IMR-90 (cell line): ENCODE measurements at regions of chr22 and their contacts with region 1.

Region 1: DNA sequence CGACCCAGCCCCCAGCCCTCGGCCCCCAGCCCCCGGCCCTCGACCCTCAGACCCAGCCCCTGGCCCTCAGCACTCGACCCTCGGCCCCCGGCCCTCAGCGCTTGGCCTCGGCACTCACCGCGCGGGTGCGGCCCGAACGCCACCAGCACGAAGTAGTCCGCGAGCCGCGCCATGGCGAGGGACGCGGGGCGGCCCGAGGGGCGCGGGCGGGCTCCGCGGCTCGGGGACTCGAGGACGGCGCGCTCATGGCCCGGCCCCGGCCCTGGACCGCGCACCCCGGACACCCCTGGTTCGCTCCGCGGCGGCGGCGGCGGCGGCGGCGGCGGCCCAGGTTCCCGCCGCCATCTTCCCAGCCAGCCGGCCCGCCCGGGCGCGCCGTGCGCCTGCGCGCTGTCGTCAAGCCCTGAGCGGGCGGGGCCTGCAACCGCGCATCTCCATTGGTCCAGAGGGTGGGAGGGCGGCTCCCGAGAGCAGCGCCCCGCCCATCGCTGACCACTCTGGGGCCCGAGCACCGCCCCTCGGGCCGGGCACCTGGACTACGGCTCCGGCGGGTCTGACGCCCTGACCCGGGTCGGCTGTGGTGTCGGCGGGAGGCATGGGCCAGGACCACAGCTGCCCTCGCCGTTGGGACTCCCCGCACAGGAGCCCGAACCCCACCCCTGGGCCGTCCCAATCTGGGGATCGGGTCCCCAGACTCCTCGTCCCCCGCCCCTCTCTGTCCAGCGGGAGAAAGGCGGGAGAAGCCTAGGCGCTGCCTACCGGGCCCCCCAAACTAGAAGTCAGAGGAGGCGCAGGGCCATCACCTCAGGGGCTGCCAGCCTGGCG is at the start of gene SBF1:
- DNase-seq: peak; percentile 84
- ATAC-seq: peak; percentile 96
- H3K4me3 ChIP-seq: peak within 1 kb of the TSS; percentile 87
- H3K27ac ChIP-seq: peak within 1 kb of the TSS; percentile 53
- H3K4me1 ChIP-seq: peaks cover 22% of the 10 kb centered on the region
- H3K27me3 ChIP-seq: peaks cover 8% of the 10 kb centered on the region
- CTCF ChIP-seq: no peak
- POLR2A ChIP-seq: 0 out of 2 replicates have a peak, but pooled peaks have one; percentile 26
- RAD21 ChIP-seq: no peak
- total RNA-seq, gene SBF1: 21.5 and 22.8 TPM in 2 replicates

Region 2: GRCh38 chr22:50485201-50486131 is 10.6 kb after region 1 on chr22:
- CTCF ChIA-PET with region 1: no interaction called
- POLR2A ChIA-PET with region 1: no interaction called
- dilution Hi-C with region 1: no loop called
- in situ Hi-C with region 1: no loop called
- intact Hi-C with region 1: no loop called
- DNase-seq: no peak
- ATAC-seq: no peak
- H3K4me3 ChIP-seq: no peak overlapping the region
- H3K27ac ChIP-seq: no peak overlapping the region
- H3K4me1 ChIP-seq: no peaks in the 10 kb centered on the region
- H3K27me3 ChIP-seq: peaks cover 8% of the 10 kb centered on the region
- CTCF ChIP-seq: no peak
- POLR2A ChIP-seq: no peak
- RAD21 ChIP-seq: no peak

Region 3: GRCh38 chr22:50498322-50498890 is 23.5 kb after region 1 on chr22:
- CTCF ChIA-PET with region 1: no interaction called
- POLR2A ChIA-PET with region 1: no interaction called
- dilution Hi-C with region 1: no loop called
- in situ Hi-C with region 1: no loop called
- intact Hi-C with region 1: loop called (anchors 1 kb)
- DNase-seq: peak; percentile 51
- ATAC-seq: peak; percentile 98
- H3K4me3 ChIP-seq: no peak overlapping the region
- H3K27ac ChIP-seq: no peak overlapping the region
- H3K4me1 ChIP-seq: no peaks in the 10 kb centered on the region
- H3K27me3 ChIP-seq: peaks cover 4% of the 10 kb centered on the region
- CTCF ChIP-seq: peak; percentile 72
- POLR2A ChIP-seq: no peak
- RAD21 ChIP-seq: peak; percentile 74

Region 4: DNA sequence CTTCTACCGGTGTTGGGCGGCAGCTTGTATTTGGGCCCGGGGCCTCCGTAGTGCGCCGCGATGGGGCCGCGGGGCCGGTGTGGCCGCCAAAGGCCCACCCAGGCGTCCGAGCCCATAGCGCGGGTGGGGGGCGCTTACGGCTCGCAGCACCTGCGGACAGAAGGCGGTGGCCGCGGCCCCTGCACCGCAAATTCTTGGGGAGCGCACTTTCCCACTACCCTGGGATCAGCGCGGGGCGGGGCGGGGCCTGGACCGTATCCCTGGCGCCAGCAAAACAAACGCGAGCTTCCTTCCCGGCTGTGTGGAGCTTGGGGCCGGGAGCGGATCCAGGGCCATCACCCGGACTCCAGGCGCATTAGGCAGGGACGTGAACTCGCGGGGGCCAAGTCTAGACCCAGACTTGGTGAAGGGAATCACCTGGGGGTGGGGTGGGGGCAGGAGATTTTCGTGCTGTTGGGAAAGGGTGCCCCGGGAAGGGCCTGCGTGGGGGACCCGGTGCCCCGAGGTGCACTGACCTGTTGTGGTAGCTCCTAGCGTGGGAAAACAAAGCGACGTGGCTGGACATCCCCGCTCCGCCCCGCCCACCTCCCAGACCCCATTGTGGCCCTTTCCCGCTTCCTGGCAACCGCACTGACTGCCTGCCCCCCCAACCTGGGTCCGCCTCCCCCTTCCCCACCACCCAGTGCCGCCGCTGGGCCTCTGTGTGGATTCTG is 57.2 kb after region 1 on chr22:
- CTCF ChIA-PET with region 1: no interaction called
- POLR2A ChIA-PET with region 1: no interaction called
- dilution Hi-C with region 1: no loop called
- in situ Hi-C with region 1: no loop called
- intact Hi-C with region 1: no loop called
- DNase-seq: peak; percentile 41
- ATAC-seq: peak; percentile 67
- H3K4me3 ChIP-seq: peak overlapping the region; percentile 39
- H3K27ac ChIP-seq: no peak overlapping the region; the same call in 1 of the 2 replicates
- H3K4me1 ChIP-seq: peaks cover 13% of the 10 kb centered on the region
- H3K27me3 ChIP-seq: peaks cover 5% of the 10 kb centered on the region; the same call in 1 of the 2 replicates
- CTCF ChIP-seq: no peak
- POLR2A ChIP-seq: no peak
- RAD21 ChIP-seq: no peak

Region 5: GRCh38 chr22:50544078-50544745 is 69.3 kb after region 1 on chr22:
- CTCF ChIA-PET with region 1: no interaction called
- POLR2A ChIA-PET with region 1: no interaction called
- dilution Hi-C with region 1: no loop called
- in situ Hi-C with region 1: no loop called
- intact Hi-C with region 1: no loop called
- DNase-seq: peak; percentile 49
- ATAC-seq: peak; percentile 52; the same call in 1 of the 2 replicates
- H3K4me3 ChIP-seq: 0 out of 2 replicates have a peak overlapping the region, but pooled peaks have one; percentile 5
- H3K27ac ChIP-seq: no peak overlapping the region
- H3K4me1 ChIP-seq: peaks cover 5% of the 10 kb centered on the region
- H3K27me3 ChIP-seq: peaks cover 43% of the 10 kb centered on the region
- CTCF ChIP-seq: peak; percentile 61
- POLR2A ChIP-seq: no peak
- RAD21 ChIP-seq: peak; percentile 45

Region 6: GRCh38 chr22:50595189-50595588 is 120.3 kb after region 1 on chr22:
- CTCF ChIA-PET with region 1: no interaction called
- POLR2A ChIA-PET with region 1: no interaction called
- dilution Hi-C with region 1: no loop called
- in situ Hi-C with region 1: no loop called
- intact Hi-C with region 1: no loop called
- DNase-seq: no peak
- ATAC-seq: no peak
- H3K4me3 ChIP-seq: no peak overlapping the region
- H3K27ac ChIP-seq: no peak overlapping the region
- H3K4me1 ChIP-seq: no peaks in the 10 kb centered on the region
- H3K27me3 ChIP-seq: peaks cover 6% of the 10 kb centered on the region
- CTCF ChIP-seq: no peak
- POLR2A ChIP-seq: no peak
- RAD21 ChIP-seq: no peak